ENCODE measurements at regions of chr3 and their contacts with region 1.

Region 1: GRCh38 chr3:192831111-192831644 is 86.5 kb downstream of the MB21D2 start:
- DNase-seq: peak; percentile 15
- H3K4me3 Mint-ChIP-seq: peak overlapping the region; percentile 25
- H3K27ac Mint-ChIP-seq: peak overlapping the region; percentile 88
- H3K4me1 Mint-ChIP-seq: peaks cover 67% of the 10 kb centered on the region
- H3K27me3 Mint-ChIP-seq: no peaks in the 10 kb centered on the region

Region 2: DNA sequence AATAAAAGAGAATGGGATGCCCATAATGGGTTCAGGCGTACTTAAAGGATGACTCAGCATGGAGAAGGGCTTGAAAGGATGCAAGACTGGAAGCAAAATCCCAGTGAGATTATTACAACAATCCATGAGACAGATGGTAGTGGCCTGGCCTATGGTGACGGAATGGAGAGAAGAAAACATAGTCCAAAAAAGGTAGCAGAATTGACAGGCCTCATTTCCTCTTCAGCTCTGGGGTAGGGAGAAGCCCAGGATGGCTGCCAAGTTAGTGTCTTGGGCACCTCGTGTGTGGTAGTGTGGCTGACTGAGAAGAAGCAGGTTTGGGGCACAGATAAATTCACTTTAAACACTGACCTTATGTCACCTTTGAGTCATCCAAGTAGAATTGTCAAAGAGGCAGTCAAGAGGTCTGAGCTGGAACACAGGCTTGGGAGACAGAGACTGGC is 68.4 kb after region 1 on chr3:
- intact Hi-C with region 1: loop called (anchors 1 kb)
- DNase-seq: no peak
- H3K4me3 Mint-ChIP-seq: peak overlapping the region; percentile 41
- H3K27ac Mint-ChIP-seq: peak overlapping the region; percentile 79
- H3K4me1 Mint-ChIP-seq: peaks cover 74% of the 10 kb centered on the region
- H3K27me3 Mint-ChIP-seq: no peaks in the 10 kb centered on the region

Region 3: GRCh38 chr3:192911293-192911692 is 80.1 kb after region 1 on chr3:
- intact Hi-C with region 1: no loop called
- DNase-seq: no peak
- H3K4me3 Mint-ChIP-seq: no peak overlapping the region
- H3K27ac Mint-ChIP-seq: no peak overlapping the region
- H3K4me1 Mint-ChIP-seq: peaks cover 61% of the 10 kb centered on the region
- H3K27me3 Mint-ChIP-seq: peaks cover 5% of the 10 kb centered on the region

Measured in activated T-helper 1 cell treated with anti-CD3 and anti-CD28 coated beads, Interleukin-12 subunit alpha, Interleukin-12 subunit beta, Interleukin-2, Interleukin-4 antibody, amounts not matched to agents 30 ng/mL and 10 ng/mL and 1 ng/mL, durations not matched to agents 14 hours and 24 hours and 36 hours (primary cell).